Activated T-helper 2 cell treated with anti-CD3 and anti-CD28 coated beads, Interferon-gamma antibody, Interleukin-2, Interleukin-4, amounts not matched to agents 10 μg/mL and 5 μg/mL and 100 μg/mL, durations not matched to agents 14 hours and 24 hours and 36 hours (primary cell): ENCODE measurements at regions of chr7 and their contacts with region 1.

Region 1: DNA sequence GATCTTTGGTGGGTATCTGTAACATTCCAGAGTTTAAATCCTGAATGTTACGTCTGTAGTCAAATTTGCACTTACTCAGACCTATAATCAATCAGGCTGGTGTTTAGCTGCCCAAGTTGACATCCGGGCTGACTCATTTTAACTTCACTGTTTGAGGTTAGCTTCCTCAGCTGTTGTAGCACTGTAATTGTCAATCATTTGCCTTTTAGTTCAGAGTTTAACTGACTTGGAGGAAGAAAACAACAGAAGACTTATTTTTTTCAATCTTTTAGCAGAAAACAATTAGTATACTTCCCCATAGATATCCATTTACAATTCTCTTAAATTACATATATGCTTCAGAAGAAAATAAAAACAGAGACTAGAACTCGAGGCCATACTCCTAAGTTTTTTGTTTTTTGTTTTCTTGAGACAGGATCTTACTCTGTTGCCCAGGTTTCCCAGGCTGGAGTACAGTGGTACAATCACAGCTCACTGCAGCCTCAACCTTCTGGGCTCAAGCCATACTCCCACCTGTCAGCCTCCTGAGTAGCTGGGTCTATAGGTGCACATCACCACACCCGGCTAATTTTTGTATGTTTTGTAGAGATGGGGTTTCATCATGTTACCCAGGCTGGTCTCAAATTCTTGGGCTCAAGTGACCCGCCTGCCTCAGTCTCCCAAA is 38.5 kb upstream of the LRRC17 start:
- DNase-seq: peak; percentile 17
- H3K4me3 Mint-ChIP-seq: no peak overlapping the region
- H3K27ac Mint-ChIP-seq: peak overlapping the region; percentile 28
- H3K4me1 Mint-ChIP-seq: peaks cover 33% of the 10 kb centered on the region
- H3K27me3 Mint-ChIP-seq: peaks cover 2% of the 10 kb centered on the region

Region 2: DNA sequence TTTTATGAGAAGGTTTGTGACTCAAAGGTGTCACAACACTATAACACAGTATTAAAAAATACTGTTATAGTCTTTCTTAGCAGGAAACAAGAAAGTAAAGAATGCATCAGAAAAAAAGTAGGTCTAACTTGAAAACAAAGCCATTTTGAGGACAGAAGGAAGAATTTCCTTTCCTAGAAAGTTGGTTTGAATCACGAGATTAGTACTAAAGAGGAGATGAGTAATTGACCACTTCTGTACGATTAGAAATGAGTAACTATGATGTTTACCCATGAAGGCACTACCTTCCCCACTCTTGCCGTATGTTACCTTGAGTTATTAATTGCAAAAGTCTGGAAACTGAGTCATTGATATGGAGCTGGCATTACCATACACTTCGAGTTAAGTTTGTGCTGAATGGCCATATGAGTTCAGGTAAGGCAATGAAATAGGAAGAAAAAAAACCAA is 60.2 kb before region 1 on chr7:
- intact Hi-C with region 1: loop called (anchors 1 kb)
- DNase-seq: no peak
- H3K4me3 Mint-ChIP-seq: no peak overlapping the region
- H3K27ac Mint-ChIP-seq: peak overlapping the region; percentile 32
- H3K4me1 Mint-ChIP-seq: peaks cover 12% of the 10 kb centered on the region
- H3K27me3 Mint-ChIP-seq: no peaks in the 10 kb centered on the region

Region 3: DNA sequence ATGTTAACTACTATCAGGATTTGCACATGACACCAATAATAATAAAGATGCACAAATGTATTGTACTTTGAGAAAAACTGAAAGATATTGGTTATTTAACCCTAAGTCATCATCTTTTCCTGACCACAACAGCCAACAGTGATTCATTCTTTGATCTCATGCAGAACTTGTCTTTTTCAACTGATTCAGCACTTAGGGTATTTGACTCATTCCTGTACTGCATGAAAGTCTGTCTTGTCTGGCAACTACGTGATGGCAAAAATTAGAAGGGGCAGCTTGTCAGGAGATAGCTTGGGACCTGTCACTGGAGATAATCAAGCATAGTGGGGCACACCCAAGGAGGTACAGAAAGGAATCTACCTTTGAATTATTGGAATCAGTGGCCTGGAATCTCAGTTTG is 39.3 kb before region 1 on chr7:
- intact Hi-C with region 1: loop called (anchors 1 kb)
- DNase-seq: no peak
- H3K4me3 Mint-ChIP-seq: no peak overlapping the region
- H3K27ac Mint-ChIP-seq: peak overlapping the region; percentile 20
- H3K4me1 Mint-ChIP-seq: peaks cover 10% of the 10 kb centered on the region
- H3K27me3 Mint-ChIP-seq: peaks cover 20% of the 10 kb centered on the region

Region 4: DNA sequence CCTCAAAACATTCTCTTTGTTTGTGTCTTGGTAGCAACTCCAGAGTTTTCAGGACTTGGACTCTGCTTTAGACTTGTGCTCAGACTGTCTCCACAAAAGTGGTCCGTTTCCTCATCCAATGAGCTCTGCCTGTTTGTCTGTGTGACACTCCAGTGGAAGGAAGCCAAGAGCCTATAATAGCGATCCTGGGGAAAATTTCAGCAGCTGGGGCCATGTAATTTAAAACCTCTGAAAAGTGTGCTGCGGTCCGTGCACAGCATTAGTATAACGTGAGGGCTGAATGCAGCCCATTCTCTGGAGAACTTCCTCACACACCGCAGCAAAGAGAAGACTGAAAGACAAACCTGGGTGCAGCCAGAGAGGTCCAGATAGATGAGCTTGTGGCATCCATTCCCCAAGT is 38.4 kb after region 1 on chr7 and contains the start of gene LRRC17:
- intact Hi-C with region 1: no loop called
- DNase-seq: no peak
- H3K4me3 Mint-ChIP-seq: no peak within 1 kb of the TSS
- H3K27ac Mint-ChIP-seq: no peak within 1 kb of the TSS
- H3K4me1 Mint-ChIP-seq: peaks cover 4% of the 10 kb centered on the region
- H3K27me3 Mint-ChIP-seq: peaks cover 10% of the 10 kb centered on the region
- total RNA-seq, gene LRRC17: 0.18 TPM in 1 of 2 replicates, not detected in the other

Region 5: DNA sequence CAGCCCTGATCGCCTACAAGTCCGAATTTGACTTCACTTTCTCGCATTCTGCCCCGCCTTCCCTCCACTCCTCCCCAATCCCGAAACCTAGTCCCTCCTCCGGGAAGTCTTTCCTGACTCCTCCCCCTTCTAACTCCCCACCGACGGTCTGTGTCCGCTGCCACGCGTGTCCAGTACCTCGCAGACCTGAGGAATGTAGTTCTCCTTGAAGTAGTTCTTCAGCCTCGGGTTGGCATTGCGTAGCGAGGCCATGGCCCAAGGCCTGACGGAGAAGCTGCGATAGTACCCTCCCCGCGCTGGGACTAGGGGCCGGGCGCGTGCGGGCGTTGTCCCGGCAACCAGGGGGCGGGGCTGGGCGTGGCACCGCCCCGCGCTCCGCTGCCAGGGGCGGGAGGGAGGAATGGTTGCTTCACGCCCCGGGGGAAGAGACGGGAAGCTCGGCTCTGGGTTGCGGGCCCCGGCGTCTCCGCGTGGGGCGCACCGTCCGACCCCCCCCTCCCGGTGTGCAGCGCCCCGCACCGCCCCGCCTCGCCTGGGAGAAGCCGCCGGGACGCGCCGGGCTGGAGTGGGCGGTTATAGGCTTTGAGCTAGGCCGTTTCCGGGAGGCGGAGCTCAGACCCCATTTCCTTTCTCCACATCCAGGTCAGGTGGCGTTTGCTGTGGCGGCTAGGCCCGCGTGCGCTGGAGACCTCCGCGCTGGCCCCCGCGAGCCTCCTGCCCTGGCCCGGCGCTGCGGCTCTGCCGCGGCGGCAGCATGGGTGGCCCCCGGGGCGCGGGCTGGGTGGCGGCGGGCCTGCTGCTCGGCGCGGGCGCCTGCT is 200.4 kb after region 1 on chr7 and contains the starts of genes ARMC10 and FBXL13:
- intact Hi-C with region 1: loop called (anchors 10 kb)
- DNase-seq: peak; percentile 83
- H3K4me3 Mint-ChIP-seq: peak within 1 kb of the TSS; percentile 93
- H3K27ac Mint-ChIP-seq: peak within 1 kb of the TSS; percentile 90
- H3K4me1 Mint-ChIP-seq: peaks cover 26% of the 10 kb centered on the region
- H3K27me3 Mint-ChIP-seq: peaks cover 2% of the 10 kb centered on the region
- total RNA-seq, gene ARMC10: 46.9 and 49.1 TPM in 2 replicates
- total RNA-seq, gene FBXL13: 0.41 and 0.76 TPM in 2 replicates